ENCODE measurements at regions of chr5 and their contacts with region 1.

Region 1: GRCh38 chr5:15215056-15215455 is 284.9 kb upstream of the FBXL7 start:
- DNase-seq: no peak
- H3K4me3 ChIP-seq: no peak overlapping the region
- H3K27ac ChIP-seq: no peak overlapping the region
- H3K4me1 ChIP-seq: no peaks in the 10 kb centered on the region
- H3K27me3 ChIP-seq: no peaks in the 10 kb centered on the region
- CTCF ChIP-seq: no peak
- POLR2A ChIP-seq: no peak

Region 2: GRCh38 chr5:15783734-15784133 is 568.7 kb after region 1 on chr5:
- intact Hi-C with region 1: loop called (anchors 5 kb)
- DNase-seq: no peak
- H3K4me3 ChIP-seq: no peak overlapping the region
- H3K27ac ChIP-seq: no peak overlapping the region
- H3K4me1 ChIP-seq: no peaks in the 10 kb centered on the region
- H3K27me3 ChIP-seq: no peaks in the 10 kb centered on the region
- CTCF ChIP-seq: no peak
- POLR2A ChIP-seq: no peak

Measured in breast epithelium (tissue), 4 donors.